ENCODE measurements at regions of chr15 and their contacts with region 1.

Region 1: DNA sequence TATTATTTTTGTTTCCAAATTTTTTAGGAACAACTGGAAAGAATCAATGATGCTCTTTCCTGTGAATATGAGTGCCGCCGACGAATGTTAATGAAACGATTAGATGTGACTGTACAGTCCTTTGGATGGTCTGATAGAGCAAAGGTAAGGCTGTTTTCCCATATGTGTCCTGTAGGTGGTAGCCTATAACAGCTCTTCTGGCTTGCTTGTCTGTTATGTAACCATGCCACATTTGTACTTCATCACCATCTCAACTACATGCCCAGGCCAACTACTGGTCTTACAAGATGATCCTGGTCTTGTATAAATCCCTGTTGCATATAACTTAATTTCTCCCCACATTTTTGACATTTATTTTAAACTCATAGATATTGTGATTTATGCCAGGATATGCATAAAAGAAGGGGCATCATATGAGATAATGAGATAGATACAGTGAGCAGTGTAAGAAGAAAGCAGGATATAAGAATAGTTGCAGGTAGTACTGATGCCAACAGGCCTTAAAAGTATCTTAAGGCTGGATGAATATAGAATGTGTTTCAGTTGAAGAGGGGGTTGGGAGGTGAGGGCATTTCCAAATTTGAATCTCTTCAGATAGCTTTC is 20.3 kb downstream of the FAM98B start:
- DNase-seq: no peak
- H3K4me3 ChIP-seq: no peak overlapping the region
- H3K27ac ChIP-seq: no peak overlapping the region
- H3K4me1 ChIP-seq: no peaks in the 10 kb centered on the region
- H3K27me3 ChIP-seq: no peaks in the 10 kb centered on the region
- CTCF ChIP-seq: peak; percentile 54 to 70

Region 2: GRCh38 chr15:38252481-38253412 is 221.5 kb before region 1 on chr15 and contains the start of gene SPRED1:
- intact Hi-C with region 1: no loop called
- DNase-seq: peak; percentile 71 to 88
- H3K4me3 ChIP-seq: peak within 1 kb of the TSS; percentile 90 to 92
- H3K27ac ChIP-seq: peak within 1 kb of the TSS; percentile 99
- H3K4me1 ChIP-seq: peaks cover 0 to 37% (median 7%) of the 10 kb centered on the region in 4 donors
- H3K27me3 ChIP-seq: no peaks in the 10 kb centered on the region
- CTCF ChIP-seq: no peak

Region 3: GRCh38 chr15:38688761-38689160 is 214.5 kb after region 1 on chr15:
- intact Hi-C with region 1: loop called (anchors 5 kb)
- DNase-seq: no peak
- H3K4me3 ChIP-seq: no peak overlapping the region
- H3K27ac ChIP-seq: no peak overlapping the region
- H3K4me1 ChIP-seq: peaks cover 0 to 11% (median 0%) of the 10 kb centered on the region in 4 donors
- H3K27me3 ChIP-seq: no peaks in the 10 kb centered on the region
- CTCF ChIP-seq: no peak

Region 4: DNA sequence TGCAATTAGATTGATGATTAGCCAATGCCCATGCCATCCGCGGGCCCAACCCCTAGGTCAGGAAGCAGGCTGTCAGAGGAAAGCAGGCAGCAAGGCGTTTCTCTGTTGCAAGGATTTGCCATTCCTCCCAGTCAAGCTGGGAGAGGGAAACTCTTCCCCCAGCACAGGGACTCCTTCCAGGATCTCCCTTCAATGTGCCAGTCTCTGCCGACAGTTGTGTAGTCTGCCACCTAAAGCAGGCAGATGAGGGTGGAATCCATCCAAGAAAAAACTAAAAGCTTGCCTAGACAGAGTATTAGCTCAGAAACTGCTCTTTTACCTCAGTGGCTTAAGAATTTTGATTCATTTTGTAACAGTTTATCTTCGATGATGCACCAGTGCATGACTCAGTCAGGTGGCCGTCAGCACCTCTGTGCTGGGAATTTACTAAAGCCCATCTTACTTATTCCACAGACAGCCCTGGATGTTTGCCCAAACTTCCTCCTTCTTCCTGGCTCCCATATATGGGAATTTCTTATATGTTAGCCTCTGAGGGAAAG is 605.1 kb after region 1 on chr15:
- intact Hi-C with region 1: no loop called
- DNase-seq: no peak
- H3K4me3 ChIP-seq: no peak overlapping the region
- H3K27ac ChIP-seq: no peak overlapping the region
- H3K4me1 ChIP-seq: peaks cover 0 to 5% (median 0%) of the 10 kb centered on the region in 4 donors
- H3K27me3 ChIP-seq: no peaks in the 10 kb centered on the region
- CTCF ChIP-seq: no peak

Measured in tibial artery (tissue), 4 donors.